Lower lobe of right lung (tissue), 2 donors: ENCODE measurements at regions of chr17 and their contacts with region 1.

Region 1: GRCh38 chr17:75109407-75110233 is at the start of gene ARMC7:
- DNase-seq: peak; percentile 95
- ATAC-seq: peak; percentile 90 to 91
- H3K4me3 ChIP-seq: peak within 1 kb of the TSS; percentile 96
- H3K27ac ChIP-seq: peak within 1 kb of the TSS; percentile 89
- H3K4me1 ChIP-seq: peaks cover 46% of the 10 kb centered on the region
- H3K27me3 ChIP-seq: no peaks in the 10 kb centered on the region
- CTCF ChIP-seq: no peak
- total RNA-seq, gene ARMC7: 16.7 TPM

Region 2: DNA sequence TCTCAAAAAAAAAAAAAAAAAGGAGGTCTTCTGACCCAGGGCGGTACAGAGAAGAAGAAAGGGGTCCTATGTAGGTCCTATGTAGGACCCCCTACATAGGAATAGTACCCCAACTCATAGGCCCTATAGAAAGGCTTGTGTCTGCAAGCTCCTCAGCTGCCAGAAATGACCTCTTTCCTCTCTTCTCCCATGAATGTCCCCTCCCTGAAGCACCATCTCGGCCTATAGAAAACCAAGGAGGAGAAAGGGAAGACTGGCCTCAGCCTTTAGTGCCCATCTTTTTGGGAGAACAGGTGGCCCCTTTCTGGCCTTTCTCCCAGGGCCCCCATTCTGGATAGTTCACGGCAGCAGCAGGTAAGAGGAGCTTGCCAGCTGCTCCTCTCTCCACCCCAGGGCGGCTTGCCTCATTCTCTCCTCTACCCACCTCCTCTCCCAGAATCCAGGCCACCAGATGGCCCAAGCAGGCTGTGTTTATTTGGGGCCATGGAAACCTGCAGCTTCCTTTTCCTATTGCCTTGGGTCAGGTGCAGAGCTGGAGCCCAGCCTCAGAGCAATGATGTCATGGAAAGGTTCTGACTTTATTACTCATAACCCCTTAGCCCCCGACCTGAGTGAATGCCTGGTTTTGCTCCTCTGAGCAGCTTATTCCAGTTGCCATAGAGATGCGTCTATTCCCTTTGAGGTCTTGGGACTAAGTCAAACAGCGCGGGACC is 98.8 kb before region 1 on chr17:
- intact Hi-C with region 1: no loop called
- DNase-seq: no peak
- ATAC-seq: no peak
- H3K4me3 ChIP-seq: no peak overlapping the region
- H3K27ac ChIP-seq: peak overlapping the region; percentile 91
- H3K4me1 ChIP-seq: peaks cover 22% of the 10 kb centered on the region
- H3K27me3 ChIP-seq: no peaks in the 10 kb centered on the region
- CTCF ChIP-seq: no peak

Region 3: GRCh38 chr17:75173526-75173925 is 63.9 kb after region 1 on chr17:
- intact Hi-C with region 1: loop called (anchors 10 kb)
- DNase-seq: peak; percentile 44
- ATAC-seq: peak in 1 of 2 donors; percentile 46
- H3K4me3 ChIP-seq: no peak overlapping the region
- H3K27ac ChIP-seq: no peak overlapping the region
- H3K4me1 ChIP-seq: peaks cover 8% of the 10 kb centered on the region
- H3K27me3 ChIP-seq: no peaks in the 10 kb centered on the region
- CTCF ChIP-seq: no peak